ENCODE measurements at regions of chr4 and their contacts with region 1.

Region 1: DNA sequence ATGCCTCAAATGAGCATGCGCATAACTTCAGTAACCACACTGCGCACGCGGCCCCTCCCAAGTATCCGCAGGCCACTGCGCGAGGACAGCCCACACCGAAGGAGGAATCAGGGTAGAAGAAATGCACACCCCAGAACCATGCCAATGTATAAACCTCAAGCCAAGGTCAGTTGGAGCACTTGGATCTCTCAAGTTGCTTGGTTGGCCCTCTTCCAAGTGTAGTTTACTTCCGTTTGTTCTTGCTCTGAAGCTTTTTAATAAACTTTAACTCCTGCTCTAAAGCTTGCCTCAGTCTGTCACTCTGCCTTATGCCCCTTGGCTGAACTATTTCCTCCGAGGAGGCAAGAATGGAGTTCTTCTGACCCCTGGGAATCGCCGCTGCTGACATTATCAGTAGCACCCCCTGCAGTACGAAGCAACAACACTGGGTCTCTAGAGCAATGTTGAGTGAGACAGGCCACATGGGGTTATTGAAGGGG is 22.0 kb upstream of the SPINK2 start:
- DNase-seq: no peak
- ATAC-seq: no peak
- H3K4me3 Mint-ChIP-seq: no peak overlapping the region
- H3K27ac Mint-ChIP-seq: no peak overlapping the region
- H3K4me1 Mint-ChIP-seq: no peaks in the 10 kb centered on the region
- H3K27me3 Mint-ChIP-seq: no peaks in the 10 kb centered on the region

Region 2: DNA sequence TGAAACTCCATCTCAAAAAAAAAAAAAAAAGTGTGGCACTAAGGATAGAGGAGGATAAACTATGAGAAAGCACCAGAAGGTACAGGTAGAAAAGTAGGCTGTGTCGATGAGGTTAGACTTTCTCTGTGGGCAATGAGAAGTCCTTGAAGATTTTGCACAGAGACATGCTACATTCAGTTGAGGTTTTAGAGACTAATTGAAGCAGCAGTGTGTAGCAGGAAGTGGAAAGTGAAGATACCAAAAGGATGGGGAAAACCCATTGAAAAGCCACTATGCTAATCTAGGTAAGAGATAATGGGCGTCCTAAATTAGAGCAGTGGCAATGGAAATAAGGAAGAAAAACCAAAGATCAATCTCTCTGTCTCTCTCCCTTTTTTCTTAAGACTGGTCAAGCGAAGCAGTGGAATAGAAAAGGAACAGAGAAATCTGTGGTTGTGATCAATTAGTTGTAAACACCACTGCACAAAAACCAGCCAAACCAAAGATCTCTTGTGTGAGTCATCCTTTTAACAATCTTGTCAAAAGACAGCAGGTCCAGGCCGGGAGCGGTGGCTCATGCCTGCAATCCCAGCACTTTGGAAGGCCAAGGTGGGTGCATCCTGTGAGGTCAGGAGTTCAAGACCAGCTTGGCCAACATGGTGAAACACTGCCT is 25.5 kb before region 1 on chr4:
- CTCF ChIA-PET with region 1: interaction called, 10 read pairs
- DNase-seq: peak; percentile 62
- ATAC-seq: peak; percentile 82
- H3K4me3 Mint-ChIP-seq: peak overlapping the region; percentile 1
- H3K27ac Mint-ChIP-seq: peak overlapping the region; percentile 71
- H3K4me1 Mint-ChIP-seq: peaks cover 33% of the 10 kb centered on the region
- H3K27me3 Mint-ChIP-seq: peaks cover 38% of the 10 kb centered on the region

Measured in activated CD8-positive, alpha-beta memory T cell treated with anti-CD3 and anti-CD28 coated beads, Interleukin-2, amount 10 ng/mL, durations not matched to agents 7 days and 5 days (primary cell).